ENCODE measurements at regions of chr7 and their contacts with region 1.

Region 1: DNA sequence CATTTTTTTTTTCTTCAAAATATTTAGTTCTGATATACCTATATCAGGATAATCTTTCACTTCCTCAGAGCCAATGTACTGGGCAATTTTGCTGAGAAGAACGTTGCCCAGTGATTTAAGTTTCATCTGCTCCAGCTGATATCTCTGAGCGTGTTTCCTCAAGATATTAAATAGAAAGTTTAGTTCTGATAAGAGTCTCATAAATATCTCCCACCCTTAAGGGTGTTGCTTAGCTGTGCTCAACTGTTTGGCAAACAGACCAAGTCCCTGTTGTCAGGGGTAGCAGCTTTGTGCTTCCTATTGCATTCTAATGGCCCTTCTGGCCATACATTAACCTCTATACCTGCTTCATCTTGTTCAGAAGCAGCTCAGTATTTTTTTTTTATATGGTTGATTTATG is 84.7 kb upstream of the GPR141 start:
- DNase-seq: no peak

Region 2: GRCh38 chr7:37666026-37666780 is 67.4 kb after region 1 on chr7:
- intact Hi-C with region 1: loop called in 1 of 2 experiments (anchors 2 kb)
- DNase-seq: no peak